Activated naive CD8-positive, alpha-beta T cell treated with anti-CD3 and anti-CD28 coated beads, Interleukin-2, amount 10 ng/mL, durations not matched to agents 7 days and 5 days (primary cell): ENCODE measurements at regions of chr16 and their contacts with region 1.

Region 1: DNA sequence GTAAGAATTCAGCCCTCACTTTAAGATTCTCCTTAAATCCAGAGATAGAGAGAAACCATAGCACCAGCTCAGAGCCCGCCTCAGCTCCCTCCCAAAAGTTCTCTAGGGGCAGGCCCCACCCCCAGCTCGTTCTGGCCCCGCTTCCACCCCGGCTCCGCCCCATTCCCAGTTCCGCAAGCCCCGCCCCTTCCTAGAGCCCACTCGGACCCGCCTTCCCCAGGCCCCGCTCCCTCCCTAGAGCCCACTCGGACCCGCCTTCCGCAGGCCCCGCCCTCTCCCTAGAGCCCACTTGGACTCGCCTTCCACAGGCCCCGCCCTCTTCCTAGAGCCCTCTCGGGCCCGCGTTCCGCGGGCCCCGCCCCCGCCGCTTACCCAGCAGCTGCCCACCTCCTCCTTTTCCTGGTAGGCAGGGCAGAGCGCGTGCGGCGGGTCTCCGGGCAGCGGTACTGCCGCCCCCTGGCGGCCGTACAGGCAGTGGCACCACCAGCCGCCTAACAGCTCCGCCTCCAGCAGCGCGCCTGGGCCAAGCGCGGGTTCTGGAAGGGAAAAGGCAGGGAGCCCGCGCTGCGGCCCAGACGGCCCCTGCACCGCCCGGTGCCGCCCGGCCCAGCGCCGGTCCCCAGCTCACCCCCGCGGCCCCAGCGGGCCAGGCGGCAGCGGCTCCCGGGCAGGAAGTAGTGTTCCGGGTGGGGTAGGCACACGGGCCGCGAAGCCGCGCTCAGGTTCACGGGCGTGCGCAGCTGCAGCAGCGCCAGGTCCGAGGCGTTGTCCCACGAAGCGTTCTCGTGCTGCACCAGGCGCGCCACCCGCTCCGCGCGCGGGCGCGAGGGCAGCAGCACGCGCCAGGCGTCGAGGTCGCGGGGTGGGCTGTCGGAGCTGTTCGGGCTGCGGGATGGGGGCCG is 6.8 kb upstream of the PRSS8 start:
- DNase-seq: peak; percentile 98
- ATAC-seq: peak; percentile 87
- H3K4me3 Mint-ChIP-seq: peak overlapping the region; percentile 86
- H3K27ac Mint-ChIP-seq: peak overlapping the region; percentile 89
- H3K4me1 Mint-ChIP-seq: peaks cover 5% of the 10 kb centered on the region
- H3K27me3 Mint-ChIP-seq: peaks cover 1% of the 10 kb centered on the region

Region 2: DNA sequence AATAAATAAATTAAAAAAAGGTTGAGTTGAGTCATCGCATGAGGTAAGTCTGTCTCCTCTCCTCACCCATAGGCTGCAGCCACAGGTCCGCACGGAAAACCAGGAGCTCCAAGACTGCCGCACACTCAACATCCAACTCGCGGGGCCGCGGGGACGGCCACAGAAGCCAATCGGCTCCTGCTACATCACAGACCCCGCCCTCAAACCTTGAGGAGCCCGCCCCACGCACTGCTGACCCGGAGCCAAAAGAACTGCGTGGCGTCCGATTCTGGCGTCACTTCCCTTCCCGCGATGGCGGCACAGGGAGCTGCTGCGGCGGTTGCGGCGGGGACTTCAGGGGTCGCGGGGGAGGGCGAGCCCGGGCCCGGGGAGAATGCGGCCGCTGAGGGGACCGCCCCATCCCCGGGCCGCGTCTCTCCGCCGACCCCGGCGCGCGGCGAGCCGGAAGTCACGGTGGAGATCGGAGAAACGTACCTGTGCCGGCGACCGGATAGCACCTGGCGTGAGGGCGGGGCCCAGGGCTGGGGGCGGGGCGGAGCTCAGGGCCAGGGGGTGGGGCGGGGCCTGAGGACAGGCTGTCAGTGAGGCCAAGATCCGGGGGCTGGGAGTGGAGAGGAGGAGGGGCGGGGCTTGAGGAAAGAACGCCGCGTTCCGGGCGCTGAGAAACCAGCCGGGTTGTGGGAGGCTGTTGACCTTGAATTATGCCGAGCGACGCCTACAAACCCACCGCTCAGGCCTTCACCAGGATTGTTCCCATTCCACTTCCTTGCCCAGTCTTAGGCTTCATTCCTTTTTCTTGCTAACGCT is 24.8 kb before region 1 on chr16 and contains the start of gene KAT8:
- POLR2A ChIA-PET with region 1: interaction called, 33 read pairs
- DNase-seq: peak; percentile 95
- ATAC-seq: peak; percentile 94
- H3K4me3 Mint-ChIP-seq: peak within 1 kb of the TSS; percentile 87
- H3K27ac Mint-ChIP-seq: peak within 1 kb of the TSS; percentile 87
- H3K4me1 Mint-ChIP-seq: peaks cover 12% of the 10 kb centered on the region
- H3K27me3 Mint-ChIP-seq: no peaks in the 10 kb centered on the region
- total RNA-seq, gene KAT8: 66.5 to 72.9 TPM

Region 3: DNA sequence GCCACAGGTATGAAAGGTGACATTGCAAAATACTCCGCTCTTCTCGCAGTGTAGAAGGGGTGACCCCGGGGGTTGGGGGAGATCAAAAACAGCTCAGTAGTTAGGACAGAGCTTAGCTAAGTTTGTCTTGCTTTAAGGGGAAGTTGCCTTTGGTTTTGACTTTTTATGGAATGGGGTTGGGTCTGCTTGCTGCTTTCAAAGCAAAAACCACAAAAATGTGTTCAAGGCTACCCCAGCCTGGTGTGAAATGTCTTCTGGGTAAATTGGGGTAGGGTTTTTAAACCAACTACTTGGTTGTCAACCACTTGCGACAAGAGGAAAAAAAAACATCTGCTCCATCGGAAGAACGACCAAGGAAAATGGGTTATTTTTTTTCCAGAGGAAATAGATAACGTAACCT is 43.8 kb after region 1 on chr16:
- POLR2A ChIA-PET with region 1: interaction called, 16 read pairs
- DNase-seq: no peak
- ATAC-seq: peak; percentile 15
- H3K4me3 Mint-ChIP-seq: peak overlapping the region; percentile 62
- H3K27ac Mint-ChIP-seq: peak overlapping the region; percentile 74
- H3K4me1 Mint-ChIP-seq: peaks cover 74% of the 10 kb centered on the region
- H3K27me3 Mint-ChIP-seq: no peaks in the 10 kb centered on the region